ENCODE measurements at regions of chr9 and their contacts with region 1.

Region 1: DNA sequence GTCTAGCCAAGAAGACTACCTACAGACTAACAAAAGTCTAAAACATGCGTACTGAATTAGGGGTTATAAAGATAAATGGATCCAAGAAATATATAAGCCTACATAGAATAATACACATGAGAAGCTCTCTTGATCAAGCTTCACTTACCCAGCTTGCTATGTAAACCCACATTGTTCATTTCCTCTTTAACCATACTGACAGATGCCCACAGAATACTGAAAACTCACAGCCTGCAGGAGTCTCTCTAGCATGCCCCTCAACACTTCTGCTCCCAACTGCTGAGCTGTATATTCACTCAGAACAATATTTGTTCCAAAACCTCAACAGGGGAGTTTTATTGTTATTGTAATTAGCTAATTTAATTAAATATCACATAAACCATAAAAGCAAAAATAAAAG is 52.4 kb downstream of the RFX3 start:
- DNase-seq: no peak
- H3K4me3 Mint-ChIP-seq: no peak overlapping the region
- H3K27ac Mint-ChIP-seq: no peak overlapping the region
- H3K4me1 Mint-ChIP-seq: peaks cover 46% of the 10 kb centered on the region
- H3K27me3 Mint-ChIP-seq: no peaks in the 10 kb centered on the region

Region 2: GRCh38 chr9:3508521-3509291 is 35.3 kb after region 1 on chr9:
- intact Hi-C with region 1: loop called (anchors 5 kb)
- DNase-seq: no peak
- H3K4me3 Mint-ChIP-seq: peak overlapping the region; percentile 41
- H3K27ac Mint-ChIP-seq: no peak overlapping the region
- H3K4me1 Mint-ChIP-seq: peaks cover 28% of the 10 kb centered on the region
- H3K27me3 Mint-ChIP-seq: no peaks in the 10 kb centered on the region

Region 3: GRCh38 chr9:3534614-3535404 is 61.4 kb after region 1 on chr9:
- intact Hi-C with region 1: no loop called
- DNase-seq: no peak
- H3K4me3 Mint-ChIP-seq: no peak overlapping the region
- H3K27ac Mint-ChIP-seq: peak overlapping the region; percentile 45
- H3K4me1 Mint-ChIP-seq: peaks cover 33% of the 10 kb centered on the region
- H3K27me3 Mint-ChIP-seq: no peaks in the 10 kb centered on the region